Heart left ventricle (tissue), 16 donors: ENCODE measurements at regions of chr9 and their contacts with region 1.

Region 1: DNA sequence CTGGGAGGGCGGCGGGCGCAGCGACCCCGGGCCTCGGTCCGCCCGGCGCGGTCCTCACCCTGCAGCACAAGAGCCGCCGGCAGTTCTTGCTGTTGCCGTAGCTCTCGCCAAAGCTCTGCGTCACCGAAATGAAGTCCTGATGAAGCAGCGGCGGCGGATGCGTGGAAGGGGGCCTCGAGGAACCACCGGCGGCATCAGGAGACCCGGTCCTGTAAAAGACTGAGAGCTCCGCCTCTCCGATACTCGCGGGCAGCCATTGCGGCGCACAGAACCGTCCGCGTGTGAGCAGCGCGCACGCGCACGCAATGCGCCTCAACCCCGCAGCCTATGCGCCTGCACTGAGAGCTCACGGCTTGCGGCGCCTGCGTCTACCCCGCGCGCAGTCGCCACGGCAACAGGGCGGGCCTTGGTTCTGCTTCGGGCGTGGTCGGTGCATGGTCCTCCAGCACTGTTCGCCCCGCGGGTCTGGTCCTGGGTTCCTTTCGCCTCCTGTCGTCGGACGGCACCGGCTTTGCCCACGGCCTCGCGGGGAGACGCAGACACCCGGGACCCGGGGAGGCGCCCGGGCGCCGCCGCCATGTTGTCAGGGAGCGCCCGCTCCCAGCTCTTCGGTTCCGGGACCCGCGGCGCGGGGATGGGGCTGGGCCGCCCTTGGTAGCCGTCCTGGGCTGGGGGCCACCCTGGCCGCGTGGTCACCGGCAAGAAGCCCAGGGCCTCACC is 9.3 kb upstream of the GRIN1 start:
- DNase-seq: peak; percentile 87 to 95 (median 91)
- ATAC-seq: peak; percentile 99 to 100 (median 99)
- H3K4me3 ChIP-seq: peak overlapping the region; percentile 52 to 89 (median 80)
- H3K27ac ChIP-seq: peak overlapping the region in 11 of 12 donors; percentile 58 to 87 (median 72)
- H3K4me1 ChIP-seq: peaks cover 0 to 39% (median 24%) of the 10 kb centered on the region in 12 donors
- H3K27me3 ChIP-seq: peaks cover 0 to 22% (median 8%) of the 10 kb centered on the region in 9 donors
- CTCF ChIP-seq: no peak
- POLR2A ChIP-seq: peak in 1 of 2 donors; percentile 59

Region 2: GRCh38 chr9:136829981-136830885 is 299.4 kb before region 1 on chr9:
- intact Hi-C with region 1: no loop called
- DNase-seq: peak in 3 of 5 donors; percentile 16 to 54 (median 49)
- ATAC-seq: peak in 3 of 4 donors; percentile 14 to 34 (median 31)
- H3K4me3 ChIP-seq: no peak overlapping the region
- H3K27ac ChIP-seq: no peak overlapping the region
- H3K4me1 ChIP-seq: peaks cover 0 to 6% (median 0%) of the 10 kb centered on the region in 12 donors
- H3K27me3 ChIP-seq: no peaks in the 10 kb centered on the region
- CTCF ChIP-seq: no peak
- POLR2A ChIP-seq: no peak

Region 3: GRCh38 chr9:137055385-137056364 is 73.9 kb before region 1 on chr9:
- intact Hi-C with region 1: no loop called
- DNase-seq: peak; percentile 94 to 95 (median 94)
- ATAC-seq: peak; percentile 86 to 95 (median 88)
- H3K4me3 ChIP-seq: peak overlapping the region in 2 of 12 donors; percentile 4 to 13
- H3K27ac ChIP-seq: peak overlapping the region; percentile 49 to 89 (median 81)
- H3K4me1 ChIP-seq: peaks cover 15 to 49% (median 34%) of the 10 kb centered on the region in 12 donors
- H3K27me3 ChIP-seq: peaks cover 3 to 43% (median 21%) of the 10 kb centered on the region in 9 donors
- CTCF ChIP-seq: no peak
- POLR2A ChIP-seq: no peak

Region 4: GRCh38 chr9:137168905-137169856 is 39.6 kb after region 1 on chr9:
- intact Hi-C with region 1: loop called in 1 of 10 experiments (anchors 5 kb)
- DNase-seq: no peak
- ATAC-seq: peak in 2 of 4 donors; percentile 44
- H3K4me3 ChIP-seq: peak overlapping the region; percentile 21 to 55 (median 40)
- H3K27ac ChIP-seq: no peak overlapping the region
- H3K4me1 ChIP-seq: peaks cover 6 to 35% (median 20%) of the 10 kb centered on the region in 12 donors
- H3K27me3 ChIP-seq: peaks cover 49 to 85% (median 59%) of the 10 kb centered on the region in 9 donors
- CTCF ChIP-seq: no peak
- POLR2A ChIP-seq: no peak